ENCODE measurements at regions of chrX and their contacts with region 1.

Region 1: DNA sequence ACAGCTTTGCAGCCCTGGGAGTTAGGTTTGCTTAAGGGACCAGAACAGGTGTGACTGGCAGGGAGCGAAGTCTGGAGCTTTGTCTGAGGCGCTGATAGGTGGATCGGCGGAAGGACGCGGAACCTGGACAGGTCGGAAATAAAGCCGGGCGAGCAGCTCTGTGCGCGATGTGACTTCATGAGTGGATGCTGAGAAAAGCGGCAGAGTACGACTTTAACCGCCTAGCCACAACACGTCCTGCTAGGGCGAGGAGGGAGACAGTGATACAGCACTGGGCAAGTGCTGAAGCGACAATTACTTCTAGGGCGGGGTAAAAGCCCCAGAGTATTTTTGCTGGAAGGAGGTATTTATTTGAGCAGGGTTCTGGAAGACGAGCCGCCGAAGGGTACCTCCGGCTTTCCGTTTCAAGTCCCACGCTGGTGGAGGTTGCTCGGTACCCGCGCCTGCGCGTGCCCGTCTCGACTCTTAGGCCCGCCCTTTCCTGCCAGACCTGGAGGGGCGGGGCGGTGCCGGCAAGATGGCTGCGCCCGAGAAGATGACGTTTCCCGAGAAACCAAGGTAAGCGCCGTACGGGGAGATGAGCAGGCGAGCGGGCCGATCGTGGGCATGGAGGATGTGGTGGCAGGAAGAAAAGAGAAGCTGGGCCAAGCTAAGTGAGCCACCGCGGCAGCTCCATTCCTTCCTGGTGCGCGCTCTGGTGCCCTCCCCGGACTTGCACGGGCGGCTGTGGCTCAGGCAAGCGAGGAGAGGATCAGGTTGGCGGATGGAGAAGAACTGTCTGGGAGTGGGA is at the start of gene ZRSR2:
- DNase-seq: peak; percentile 68 to 95 (median 91)
- ATAC-seq: peak; percentile 95
- H3K4me3 ChIP-seq: peak within 1 kb of the TSS; percentile 92
- H3K4me3 Mint-ChIP-seq: peak within 1 kb of the TSS in 1 of 10 donors; percentile 48
- H3K27ac ChIP-seq: peak within 1 kb of the TSS; percentile 93
- H3K27ac Mint-ChIP-seq: no peak within 1 kb of the TSS
- H3K4me1 ChIP-seq: peaks cover 9 to 10% of the 10 kb centered on the region in 2 donors
- H3K4me1 Mint-ChIP-seq: peaks cover 0 to 36% (median 24%) of the 10 kb centered on the region in 7 donors
- H3K27me3 ChIP-seq: no peaks in the 10 kb centered on the region
- H3K27me3 Mint-ChIP-seq: no peaks in the 10 kb centered on the region
- total RNA-seq, gene ZRSR2: 20.8 to 31.7 (median 25.4) TPM

Region 2: DNA sequence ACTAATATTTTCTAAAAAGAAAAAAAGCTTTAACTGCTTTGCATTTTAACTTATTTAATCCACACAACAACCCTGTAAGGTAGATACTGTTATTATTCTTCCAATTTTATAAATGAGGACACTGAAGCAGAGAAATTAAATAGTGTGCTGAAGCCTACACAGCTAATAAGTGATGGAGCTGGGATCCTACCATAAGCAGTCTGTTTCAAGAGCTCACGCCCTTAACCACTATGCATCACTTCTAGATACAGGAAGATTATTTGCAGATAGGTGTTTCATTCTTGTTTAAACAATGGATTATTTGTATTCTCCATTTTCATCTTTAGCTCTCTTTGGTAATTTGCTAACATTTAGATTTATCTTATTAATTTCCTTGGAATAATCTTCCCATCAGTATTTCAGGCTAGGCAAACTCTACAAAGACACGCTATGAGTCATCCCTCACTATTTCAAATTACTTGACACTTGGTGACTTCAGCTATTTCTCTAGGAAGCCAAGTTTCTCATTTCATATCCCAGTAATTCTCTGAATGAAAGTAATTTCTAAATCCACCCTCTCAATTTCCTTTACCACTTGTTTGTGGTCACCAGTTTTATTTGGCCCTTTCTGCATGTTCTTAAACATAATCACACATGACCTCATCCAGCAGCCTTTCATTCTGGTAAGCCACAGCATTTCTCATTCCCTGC is 587.6 kb before region 1 on chrX:
- CTCF ChIA-PET with region 1: no interaction called
- POLR2A ChIA-PET with region 1: no interaction called
- intact Hi-C with region 1: loop called in 1 of 2 experiments (anchors 5 kb)
- DNase-seq: no peak
- ATAC-seq: no peak
- H3K4me3 ChIP-seq: no peak overlapping the region
- H3K4me3 Mint-ChIP-seq: peak overlapping the region in 1 of 10 donors; percentile 38
- H3K27ac ChIP-seq: no peak overlapping the region
- H3K27ac Mint-ChIP-seq: peak overlapping the region in 2 of 9 donors; percentile 76 to 84
- H3K4me1 ChIP-seq: peaks cover 0 to 14% of the 10 kb centered on the region in 2 donors
- H3K4me1 Mint-ChIP-seq: peaks cover 9 to 47% (median 24%) of the 10 kb centered on the region in 7 donors
- H3K27me3 ChIP-seq: no peaks in the 10 kb centered on the region
- H3K27me3 Mint-ChIP-seq: peaks cover 0 to 7% (median 0%) of the 10 kb centered on the region in 5 donors

Region 3: GRCh38 chrX:15674841-15675489 is 115.2 kb before region 1 on chrX:
- CTCF ChIA-PET with region 1: no interaction called
- POLR2A ChIA-PET with region 1: interaction called, 5 read pairs
- intact Hi-C with region 1: loop called (anchors 1 kb)
- DNase-seq: peak; percentile 70 to 99 (median 96)
- ATAC-seq: peak; percentile 90
- H3K4me3 ChIP-seq: peak overlapping the region; percentile 87
- H3K4me3 Mint-ChIP-seq: no peak overlapping the region
- H3K27ac ChIP-seq: peak overlapping the region; percentile 96
- H3K27ac Mint-ChIP-seq: no peak overlapping the region
- H3K4me1 ChIP-seq: peaks cover 5 to 11% of the 10 kb centered on the region in 2 donors
- H3K4me1 Mint-ChIP-seq: peaks cover 0 to 17% (median 12%) of the 10 kb centered on the region in 7 donors
- H3K27me3 ChIP-seq: no peaks in the 10 kb centered on the region
- H3K27me3 Mint-ChIP-seq: peaks cover 0 to 5% (median 0%) of the 10 kb centered on the region in 5 donors

Region 4: GRCh38 chrX:15737960-15738902 is 51.9 kb before region 1 on chrX and contains the start of gene CA5B:
- CTCF ChIA-PET with region 1: no interaction called
- POLR2A ChIA-PET with region 1: interaction called, 30 read pairs
- intact Hi-C with region 1: loop called (anchors 1 kb)
- DNase-seq: peak; percentile 93 to 100 (median 98)
- ATAC-seq: peak; percentile 98
- H3K4me3 ChIP-seq: peak within 1 kb of the TSS; percentile 82
- H3K4me3 Mint-ChIP-seq: peak within 1 kb of the TSS; percentile 89 to 99 (median 94)
- H3K27ac ChIP-seq: peak within 1 kb of the TSS; percentile 72
- H3K27ac Mint-ChIP-seq: peak within 1 kb of the TSS; percentile 71 to 95 (median 91)
- H3K4me1 ChIP-seq: peaks cover 16 to 19% of the 10 kb centered on the region in 2 donors
- H3K4me1 Mint-ChIP-seq: peaks cover 18 to 60% (median 43%) of the 10 kb centered on the region in 7 donors
- H3K27me3 ChIP-seq: no peaks in the 10 kb centered on the region
- H3K27me3 Mint-ChIP-seq: peaks cover 0 to 2% (median 0%) of the 10 kb centered on the region in 5 donors
- total RNA-seq, gene CA5B: 16.4 to 64.6 (median 39.5) TPM

Region 5: GRCh38 chrX:15761564-15762191 is 28.5 kb before region 1 on chrX:
- CTCF ChIA-PET with region 1: no interaction called
- POLR2A ChIA-PET with region 1: interaction called, 3 read pairs
- intact Hi-C with region 1: loop called (anchors 1 to 2 kb)
- DNase-seq: peak in 7 of 9 donors; percentile 6 to 54 (median 43)
- ATAC-seq: peak; percentile 75
- H3K4me3 ChIP-seq: no peak overlapping the region
- H3K4me3 Mint-ChIP-seq: no peak overlapping the region
- H3K27ac ChIP-seq: peak overlapping the region; percentile 6
- H3K27ac Mint-ChIP-seq: peak overlapping the region in 8 of 9 donors; percentile 37 to 77 (median 68)
- H3K4me1 ChIP-seq: peaks cover 13 to 18% of the 10 kb centered on the region in 2 donors
- H3K4me1 Mint-ChIP-seq: peaks cover 11 to 49% (median 31%) of the 10 kb centered on the region in 7 donors
- H3K27me3 ChIP-seq: no peaks in the 10 kb centered on the region
- H3K27me3 Mint-ChIP-seq: no peaks in the 10 kb centered on the region

Region 6: DNA sequence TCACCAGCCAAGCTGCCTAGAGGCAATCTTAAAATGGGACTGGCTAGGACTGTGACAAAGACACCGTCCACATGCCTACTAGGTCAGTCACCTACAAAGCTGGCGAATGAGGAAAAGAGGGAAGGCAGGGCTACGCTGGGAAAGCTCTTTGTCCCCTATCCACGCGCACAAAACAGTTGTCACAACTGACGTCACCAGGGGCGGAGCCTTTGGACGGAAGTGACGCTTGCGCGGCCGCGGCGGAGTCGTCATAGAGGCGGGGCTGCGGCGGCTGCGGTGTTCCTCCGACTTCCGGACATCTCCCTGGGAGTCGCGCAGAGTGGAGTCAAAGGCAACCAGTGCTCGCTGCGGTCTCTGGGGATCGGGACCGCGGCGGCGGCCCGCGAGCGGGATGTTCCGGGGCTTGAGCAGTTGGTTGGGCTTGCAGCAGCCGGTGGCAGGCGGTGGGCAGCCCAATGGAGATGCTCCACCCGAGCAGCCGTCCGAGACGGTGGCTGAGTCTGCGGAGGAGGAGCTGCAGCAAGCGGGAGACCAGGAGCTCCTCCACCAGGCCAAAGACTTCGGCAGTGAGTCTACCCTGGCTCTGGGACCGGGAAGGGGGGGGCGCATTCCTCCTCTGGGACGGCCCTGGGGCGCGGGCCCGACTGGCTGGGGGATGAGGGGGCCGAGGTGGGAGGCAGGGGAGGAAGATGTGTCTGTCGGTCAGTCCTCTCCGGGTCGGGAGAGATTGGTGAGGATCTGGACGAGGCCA is 929.3 kb after region 1 on chrX and contains the start of gene SYAP1:
- CTCF ChIA-PET with region 1: no interaction called
- POLR2A ChIA-PET with region 1: no interaction called
- intact Hi-C with region 1: loop called (anchors 1 to 10 kb)
- DNase-seq: peak; percentile 85 to 100 (median 96)
- ATAC-seq: peak; percentile 96
- H3K4me3 ChIP-seq: peak within 1 kb of the TSS; percentile 95
- H3K4me3 Mint-ChIP-seq: peak within 1 kb of the TSS; percentile 88 to 98 (median 94)
- H3K27ac ChIP-seq: peak within 1 kb of the TSS; percentile 99
- H3K27ac Mint-ChIP-seq: peak within 1 kb of the TSS; percentile 92 to 100 (median 99)
- H3K4me1 ChIP-seq: peaks cover 0 to 10% of the 10 kb centered on the region in 2 donors
- H3K4me1 Mint-ChIP-seq: peaks cover 2 to 63% (median 39%) of the 10 kb centered on the region in 7 donors
- H3K27me3 ChIP-seq: no peaks in the 10 kb centered on the region
- H3K27me3 Mint-ChIP-seq: no peaks in the 10 kb centered on the region
- total RNA-seq, gene SYAP1: 15.4 to 36.9 (median 15.6) TPM